Colonic mucosa (tissue), 4 donors: ENCODE measurements at regions of chr12 and their contacts with region 1.

Region 1: GRCh38 chr12:13534645-13535398 is 338.3 kb downstream of the EMP1 start:
- DNase-seq: peak; percentile 77
- H3K4me3 ChIP-seq: no peak overlapping the region
- H3K27ac ChIP-seq: no peak overlapping the region
- H3K4me1 ChIP-seq: no peaks in the 10 kb centered on the region
- H3K27me3 ChIP-seq: no peaks in the 10 kb centered on the region
- CTCF ChIP-seq: peak; percentile 84

Region 2: GRCh38 chr12:13278249-13278787 is 256.5 kb before region 1 on chr12:
- intact Hi-C with region 1: loop called (anchors 10 kb)
- DNase-seq: peak; percentile 59
- H3K4me3 ChIP-seq: no peak overlapping the region
- H3K27ac ChIP-seq: no peak overlapping the region
- H3K4me1 ChIP-seq: no peaks in the 10 kb centered on the region
- H3K27me3 ChIP-seq: no peaks in the 10 kb centered on the region
- CTCF ChIP-seq: peak; percentile 99

Region 3: DNA sequence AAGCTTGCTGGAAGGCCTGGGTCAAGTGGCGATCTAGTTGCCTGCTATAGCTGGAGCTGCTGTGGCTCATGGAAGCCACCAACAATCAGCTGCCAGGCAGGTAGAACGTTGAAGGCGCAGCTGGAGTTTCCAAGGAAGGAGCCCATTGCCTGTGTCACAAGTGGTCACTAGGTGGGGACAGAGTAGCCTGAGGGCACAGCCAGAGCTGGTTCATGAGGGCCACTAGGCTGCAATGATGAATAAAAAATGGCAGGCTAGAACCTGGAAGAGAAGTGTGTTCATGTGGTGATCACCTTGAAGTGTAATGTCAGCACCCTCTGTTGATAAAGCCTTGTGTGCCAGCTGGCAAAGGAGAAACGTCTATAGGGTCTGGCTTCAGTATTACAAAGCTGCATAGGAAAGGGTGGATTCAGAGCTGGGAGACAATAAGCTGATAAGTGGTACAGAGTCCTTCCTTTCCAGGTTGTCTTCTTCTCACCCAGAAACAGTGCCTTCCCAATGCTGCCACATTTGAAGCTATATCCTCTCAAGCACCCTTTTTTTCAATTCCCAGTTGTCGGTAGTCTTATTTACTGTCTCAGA is 172.5 kb before region 1 on chr12:
- intact Hi-C with region 1: loop called (anchors 5 kb)
- DNase-seq: peak; percentile 89
- H3K4me3 ChIP-seq: no peak overlapping the region
- H3K27ac ChIP-seq: no peak overlapping the region
- H3K4me1 ChIP-seq: no peaks in the 10 kb centered on the region
- H3K27me3 ChIP-seq: no peaks in the 10 kb centered on the region
- CTCF ChIP-seq: peak; percentile 78

Region 4: GRCh38 chr12:13816394-13816793 is 281.6 kb after region 1 on chr12:
- intact Hi-C with region 1: no loop called
- DNase-seq: no peak
- H3K4me3 ChIP-seq: no peak overlapping the region
- H3K27ac ChIP-seq: no peak overlapping the region
- H3K4me1 ChIP-seq: no peaks in the 10 kb centered on the region
- H3K27me3 ChIP-seq: no peaks in the 10 kb centered on the region
- CTCF ChIP-seq: no peak